ENCODE measurements at regions of chr7 and their contacts with region 1.

Region 1: DNA sequence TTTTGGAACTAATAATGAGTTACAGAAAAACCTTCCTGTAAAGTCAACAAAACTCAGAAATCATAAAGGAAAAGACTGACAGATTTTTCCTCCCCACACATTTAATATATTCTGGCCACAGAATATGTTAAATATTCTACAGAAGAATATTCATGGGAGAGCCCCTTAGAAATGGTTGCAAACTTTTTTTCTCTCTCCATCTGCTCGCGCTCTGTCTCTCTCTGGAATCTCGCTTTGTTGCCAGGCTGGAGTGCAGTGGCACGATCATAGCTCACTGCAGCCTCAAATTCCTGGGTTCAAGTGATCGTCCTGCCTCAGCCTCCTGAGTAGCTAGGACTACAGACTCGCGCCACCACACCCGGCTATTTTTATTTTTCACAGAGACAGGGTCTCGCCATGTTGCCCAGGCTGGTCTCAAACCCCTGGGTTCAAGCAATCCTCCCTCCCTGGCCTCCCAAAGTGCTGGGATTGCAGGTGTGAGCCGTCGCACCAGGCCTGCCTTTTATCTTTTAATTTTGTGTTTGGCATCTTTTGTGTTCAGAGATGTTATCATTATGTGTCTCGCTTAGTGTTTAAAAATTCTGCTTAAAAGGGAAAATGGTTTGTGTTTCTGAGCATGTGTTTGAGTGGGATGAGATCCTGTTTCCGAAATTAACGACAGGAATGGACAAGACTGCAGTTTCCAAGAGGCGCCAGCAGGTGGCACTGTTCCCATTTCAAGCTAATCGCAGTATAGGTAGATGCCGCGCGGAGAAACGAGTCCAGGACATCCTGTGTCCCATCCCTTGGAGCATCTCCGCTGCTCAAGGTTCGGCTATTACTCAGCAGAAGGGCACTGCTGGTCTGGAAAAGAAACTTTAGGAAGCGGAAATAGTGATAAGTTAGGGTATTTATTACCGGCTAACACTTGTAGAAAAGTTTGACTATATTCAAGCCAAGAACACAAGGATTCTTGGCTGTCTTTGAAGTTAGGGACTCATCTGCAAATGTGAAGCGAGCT is 23.1 kb upstream of the ST7 start:
- DNase-seq: peak; percentile 84 to 89
- H3K4me3 ChIP-seq: no peak overlapping the region
- H3K27ac ChIP-seq: no peak overlapping the region
- H3K4me1 ChIP-seq: peaks cover 0 to 6% of the 10 kb centered on the region in 2 donors
- H3K27me3 ChIP-seq: no peaks in the 10 kb centered on the region
- CTCF ChIP-seq: peak; percentile 87 to 95 (median 90)
- POLR2A ChIP-seq: no peak

Region 2: GRCh38 chr7:116834815-116835533 is 95.2 kb before region 1 on chr7:
- intact Hi-C with region 1: no loop called
- DNase-seq: peak; percentile 41 to 52
- H3K4me3 ChIP-seq: no peak overlapping the region
- H3K27ac ChIP-seq: no peak overlapping the region
- H3K4me1 ChIP-seq: no peaks in the 10 kb centered on the region
- H3K27me3 ChIP-seq: no peaks in the 10 kb centered on the region
- CTCF ChIP-seq: no peak
- POLR2A ChIP-seq: no peak

Region 3: GRCh38 chr7:116984917-116985316 is 54.7 kb after region 1 on chr7:
- intact Hi-C with region 1: loop called (anchors 10 kb)
- DNase-seq: no peak
- H3K4me3 ChIP-seq: no peak overlapping the region
- H3K27ac ChIP-seq: no peak overlapping the region
- H3K4me1 ChIP-seq: no peaks in the 10 kb centered on the region
- H3K27me3 ChIP-seq: no peaks in the 10 kb centered on the region
- CTCF ChIP-seq: peak; percentile 19 to 65 (median 48)
- POLR2A ChIP-seq: no peak

Region 4: GRCh38 chr7:117110480-117111337 is 180.5 kb after region 1 on chr7:
- intact Hi-C with region 1: no loop called
- DNase-seq: no peak
- H3K4me3 ChIP-seq: no peak overlapping the region
- H3K27ac ChIP-seq: no peak overlapping the region
- H3K4me1 ChIP-seq: no peaks in the 10 kb centered on the region
- H3K27me3 ChIP-seq: no peaks in the 10 kb centered on the region
- CTCF ChIP-seq: no peak
- POLR2A ChIP-seq: no peak

Measured in thyroid gland (tissue), 4 donors.